Heart right ventricle (tissue), 16 donors: ENCODE measurements at regions of chr2 and their contacts with region 1.

Region 1: GRCh38 chr2:80073134-80073561 is 231.4 kb downstream of the LRRTM1 start:
- DNase-seq: peak in 1 of 2 donors; percentile 28
- ATAC-seq: peak in 2 of 8 donors; percentile 62 to 71
- H3K4me3 ChIP-seq: no peak overlapping the region
- H3K27ac ChIP-seq: no peak overlapping the region
- H3K4me1 ChIP-seq: no peaks in the 10 kb centered on the region
- H3K27me3 ChIP-seq: peaks cover 0 to 17% (median 0%) of the 10 kb centered on the region in 7 donors
- CTCF ChIP-seq: peak; percentile 42 to 72 (median 68)

Region 2: DNA sequence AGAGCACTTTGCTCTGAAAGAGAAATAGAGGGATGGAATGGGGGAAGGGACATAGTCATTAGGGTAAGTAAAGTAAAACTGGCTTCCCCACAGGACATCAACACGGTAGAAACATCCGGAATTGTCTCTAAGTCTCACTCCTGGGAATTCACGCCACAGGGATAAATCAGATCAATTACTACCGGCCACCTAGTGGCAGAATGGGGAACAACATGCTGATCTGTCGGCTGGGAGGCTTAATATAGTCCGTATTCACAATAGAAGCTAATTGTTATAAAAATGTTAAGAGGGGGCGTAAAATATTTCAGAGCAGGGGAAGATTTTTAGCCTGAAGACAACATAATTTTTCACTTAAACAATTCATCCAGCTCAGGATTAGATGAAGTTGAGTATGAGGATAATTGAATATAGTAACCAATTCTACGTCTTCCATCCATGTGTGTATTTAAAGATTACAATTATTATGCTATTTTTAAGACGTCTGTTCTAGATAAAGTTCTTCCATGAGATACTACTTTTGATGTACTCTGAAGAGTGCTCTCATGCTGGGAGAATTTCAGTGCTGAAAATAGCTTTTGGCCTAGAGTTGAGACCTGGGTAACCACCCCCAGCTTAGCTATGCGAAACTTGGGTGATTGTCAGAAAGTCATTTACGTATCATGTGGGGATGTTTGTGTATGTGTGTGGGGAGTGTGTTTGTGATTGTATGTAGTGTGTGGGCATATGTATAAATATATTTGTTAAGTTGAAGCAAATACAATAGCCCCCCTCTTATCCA is 165.7 kb after region 1 on chr2:
- intact Hi-C with region 1: loop called in 2 of 10 experiments (anchors 5 to 10 kb)
- DNase-seq: peak in 1 of 2 donors; percentile 26
- ATAC-seq: peak; percentile 44 to 79 (median 62)
- H3K4me3 ChIP-seq: no peak overlapping the region
- H3K27ac ChIP-seq: peak overlapping the region in 1 of 10 donors; percentile 57
- H3K4me1 ChIP-seq: peaks cover 0 to 24% (median 0%) of the 10 kb centered on the region in 9 donors
- H3K27me3 ChIP-seq: no peaks in the 10 kb centered on the region
- CTCF ChIP-seq: peak; percentile 51 to 73 (median 65)